ENCODE measurements at regions of chr1 and their contacts with region 1.

Region 1: DNA sequence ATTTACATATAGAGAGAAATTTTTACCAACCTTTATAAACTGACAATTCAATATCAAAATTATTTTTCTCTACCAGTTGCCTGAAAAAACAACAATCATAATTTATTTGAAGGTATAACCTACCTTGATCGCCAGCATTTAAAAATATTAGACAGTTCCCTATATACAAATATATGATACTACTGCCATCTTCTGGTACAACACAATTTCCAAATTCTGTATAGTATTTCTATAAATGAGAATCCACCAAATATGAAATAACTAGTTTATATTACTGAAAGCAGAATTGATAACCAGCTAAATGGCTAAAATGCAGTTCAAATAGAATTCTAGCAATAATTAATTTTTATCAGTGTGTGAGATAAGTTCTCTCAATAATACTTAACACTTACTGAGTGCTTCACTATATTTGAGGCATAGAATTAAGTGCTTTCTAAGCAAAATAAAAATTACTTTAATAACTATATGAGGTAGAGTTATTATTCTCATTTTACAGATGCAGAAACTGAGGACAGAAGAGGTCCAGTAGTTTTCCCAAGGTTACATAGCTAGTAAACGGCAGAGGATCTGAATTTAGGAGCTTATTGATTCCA is 75.6 kb downstream of the PIGK start:
- DNase-seq: no peak
- H3K4me3 Mint-ChIP-seq: no peak overlapping the region
- H3K27ac Mint-ChIP-seq: no peak overlapping the region
- H3K4me1 Mint-ChIP-seq: peaks cover 2% of the 10 kb centered on the region
- H3K27me3 Mint-ChIP-seq: no peaks in the 10 kb centered on the region

Region 2: GRCh38 chr1:75991497-75992114 is 1152.0 kb before region 1 on chr1:
- CTCF ChIA-PET with region 1: no interaction called
- intact Hi-C with region 1: loop called (anchors 1 kb)
- DNase-seq: peak; percentile 88
- H3K4me3 Mint-ChIP-seq: no peak overlapping the region
- H3K27ac Mint-ChIP-seq: no peak overlapping the region
- H3K4me1 Mint-ChIP-seq: no peaks in the 10 kb centered on the region
- H3K27me3 Mint-ChIP-seq: no peaks in the 10 kb centered on the region

Region 3: GRCh38 chr1:76901158-76901767 is 242.4 kb before region 1 on chr1:
- CTCF ChIA-PET with region 1: no interaction called
- intact Hi-C with region 1: loop called (anchors 1 kb)
- DNase-seq: peak; percentile 57
- H3K4me3 Mint-ChIP-seq: no peak overlapping the region
- H3K27ac Mint-ChIP-seq: no peak overlapping the region
- H3K4me1 Mint-ChIP-seq: no peaks in the 10 kb centered on the region
- H3K27me3 Mint-ChIP-seq: no peaks in the 10 kb centered on the region

Region 4: GRCh38 chr1:77253211-77253610 is 109.6 kb after region 1 on chr1:
- CTCF ChIA-PET with region 1: no interaction called
- intact Hi-C with region 1: no loop called
- DNase-seq: no peak
- H3K4me3 Mint-ChIP-seq: no peak overlapping the region
- H3K27ac Mint-ChIP-seq: no peak overlapping the region
- H3K4me1 Mint-ChIP-seq: no peaks in the 10 kb centered on the region
- H3K27me3 Mint-ChIP-seq: no peaks in the 10 kb centered on the region

Region 5: DNA sequence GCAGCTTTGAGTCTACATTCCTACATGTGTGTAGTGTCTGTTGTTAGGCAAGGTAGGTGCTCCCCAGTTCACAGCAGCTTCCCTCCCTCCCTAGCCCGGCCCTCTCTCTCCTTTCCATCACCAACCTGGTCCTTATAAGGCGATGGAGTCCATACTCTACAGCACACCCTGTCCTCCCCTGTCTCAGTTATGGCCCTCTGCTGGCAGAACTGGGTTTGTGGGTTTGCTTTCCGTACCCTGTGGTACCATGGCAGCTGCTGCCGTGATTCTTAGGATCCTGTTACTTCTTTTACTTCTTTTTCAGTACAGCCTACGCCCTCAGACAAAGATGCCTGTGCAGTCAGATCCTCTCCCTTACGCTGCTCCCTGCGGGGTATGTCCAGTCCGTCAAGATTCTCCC is 169.9 kb after region 1 on chr1:
- CTCF ChIA-PET with region 1: interaction called, 4 read pairs
- intact Hi-C with region 1: loop called (anchors 1 kb)
- DNase-seq: peak; percentile 59
- H3K4me3 Mint-ChIP-seq: no peak overlapping the region
- H3K27ac Mint-ChIP-seq: no peak overlapping the region
- H3K4me1 Mint-ChIP-seq: peaks cover 37% of the 10 kb centered on the region
- H3K27me3 Mint-ChIP-seq: no peaks in the 10 kb centered on the region

Region 6: GRCh38 chr1:77825131-77825709 is 681.6 kb after region 1 on chr1:
- CTCF ChIA-PET with region 1: no interaction called
- intact Hi-C with region 1: loop called (anchors 10 kb)
- DNase-seq: peak; percentile 42
- H3K4me3 Mint-ChIP-seq: no peak overlapping the region
- H3K27ac Mint-ChIP-seq: no peak overlapping the region
- H3K4me1 Mint-ChIP-seq: no peaks in the 10 kb centered on the region
- H3K27me3 Mint-ChIP-seq: no peaks in the 10 kb centered on the region

Region 7: DNA sequence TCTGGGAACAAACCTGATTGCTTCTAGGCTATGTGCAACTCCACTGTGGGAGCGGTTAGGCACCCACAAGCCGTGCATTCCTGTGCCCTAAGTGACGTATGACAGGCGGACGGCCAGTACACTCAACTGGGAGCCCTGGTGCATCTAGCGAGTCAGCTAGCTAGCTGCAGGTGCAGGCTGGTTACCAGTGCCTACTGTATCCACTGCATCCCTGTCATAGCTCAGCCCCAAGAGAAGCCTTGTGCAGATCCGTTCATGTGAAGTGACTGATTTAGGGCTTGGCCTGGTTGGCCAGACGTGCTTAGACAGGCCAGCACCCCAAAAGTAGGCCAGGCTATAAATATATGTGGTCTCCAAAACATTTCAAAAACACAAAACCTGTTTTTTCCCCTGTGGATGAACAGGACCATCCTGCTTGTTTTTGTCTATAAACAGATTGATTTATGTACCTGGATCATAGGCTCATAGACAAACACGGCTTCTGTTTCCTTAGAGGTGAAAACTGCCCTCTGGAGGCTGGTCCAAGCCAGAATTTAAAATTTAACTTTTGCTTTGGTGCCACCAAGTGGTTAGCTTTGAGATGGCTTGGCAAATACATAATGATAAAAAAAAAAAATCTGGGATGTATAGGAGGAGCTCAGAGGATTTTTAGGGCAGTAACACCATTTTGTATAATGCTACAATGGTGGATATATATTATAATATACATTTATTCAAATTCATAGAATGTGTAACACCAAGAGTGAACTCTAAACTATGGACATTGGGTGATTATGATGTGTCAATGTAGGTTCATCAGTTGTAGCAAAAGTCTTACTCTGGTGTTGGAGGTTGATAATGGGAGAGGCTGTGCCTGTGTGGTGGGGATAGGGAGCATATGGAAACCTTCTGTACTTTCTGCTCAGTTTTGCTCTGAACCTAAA is 970.7 kb after region 1 on chr1:
- CTCF ChIA-PET with region 1: interaction called, 3 read pairs
- intact Hi-C with region 1: loop called (anchors 1 kb)
- DNase-seq: peak; percentile 79
- H3K4me3 Mint-ChIP-seq: no peak overlapping the region
- H3K27ac Mint-ChIP-seq: no peak overlapping the region
- H3K4me1 Mint-ChIP-seq: peaks cover 8% of the 10 kb centered on the region
- H3K27me3 Mint-ChIP-seq: no peaks in the 10 kb centered on the region

Measured in activated naive CD4-positive, alpha-beta T cell treated with anti-CD3 and anti-CD28 coated beads for 36 hours (primary cell).